Activated CD4-positive, alpha-beta memory T cell treated with anti-CD3 and anti-CD28 coated beads for 36 hours (primary cell): ENCODE measurements at regions of chr6 and their contacts with region 1.

Region 1: GRCh38 chr6:106223300-106223930 is 102.1 kb downstream of the ATG5 start:
- DNase-seq: peak; percentile 75
- H3K4me3 Mint-ChIP-seq: no peak overlapping the region
- H3K27ac Mint-ChIP-seq: no peak overlapping the region
- H3K4me1 Mint-ChIP-seq: peaks cover 37% of the 10 kb centered on the region
- H3K27me3 Mint-ChIP-seq: no peaks in the 10 kb centered on the region

Region 2: DNA sequence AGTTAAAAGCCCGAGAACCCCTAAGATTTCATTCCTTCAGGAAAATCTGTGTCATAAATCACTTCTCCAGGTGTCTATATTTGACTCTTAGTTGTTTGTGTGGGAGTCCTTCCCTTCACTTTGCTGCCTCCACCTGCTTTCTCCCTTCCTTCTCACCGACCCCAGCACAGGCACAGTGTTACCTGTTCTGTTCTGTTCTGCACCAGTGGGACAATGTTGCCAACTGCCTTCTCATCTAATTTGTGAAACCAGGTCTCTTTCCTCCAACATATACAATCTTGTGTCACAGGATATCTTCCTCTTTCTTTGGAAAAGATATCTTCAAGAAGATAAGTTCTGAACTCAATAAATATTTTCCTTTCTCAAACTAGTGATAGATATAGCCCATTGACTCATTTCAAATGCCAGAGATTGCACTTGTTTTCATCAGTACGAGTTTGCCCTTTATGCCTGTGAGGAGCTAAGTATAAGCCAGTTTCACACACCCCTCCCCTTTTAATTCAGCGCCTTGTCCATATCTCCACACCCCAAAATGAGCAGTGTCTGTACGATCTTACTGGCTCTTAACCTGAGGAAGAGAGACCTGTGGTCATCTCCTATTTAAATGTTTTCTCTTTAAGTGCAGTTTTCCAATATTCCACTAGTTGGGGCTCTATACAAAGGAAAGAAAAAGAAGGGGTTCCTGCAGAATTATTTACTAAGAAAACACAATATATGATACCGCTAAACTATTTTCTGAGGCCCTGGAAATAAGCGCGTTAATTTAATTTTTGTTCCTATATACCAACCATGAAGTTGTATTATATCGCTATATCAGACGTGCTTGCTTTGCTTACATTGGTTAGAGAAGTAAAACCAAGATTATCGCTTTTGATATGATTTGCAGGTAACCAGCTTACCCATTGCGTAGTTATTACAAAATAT is 738.9 kb before region 1 on chr6:
- CTCF ChIA-PET with region 1: interaction called, 10 read pairs
- POLR2A ChIA-PET with region 1: no interaction called
- intact Hi-C with region 1: loop called (anchors 1 kb)
- DNase-seq: no peak
- H3K4me3 Mint-ChIP-seq: peak overlapping the region; percentile 2
- H3K27ac Mint-ChIP-seq: peak overlapping the region; percentile 30
- H3K4me1 Mint-ChIP-seq: peaks cover 32% of the 10 kb centered on the region
- H3K27me3 Mint-ChIP-seq: peaks cover 7% of the 10 kb centered on the region

Region 3: DNA sequence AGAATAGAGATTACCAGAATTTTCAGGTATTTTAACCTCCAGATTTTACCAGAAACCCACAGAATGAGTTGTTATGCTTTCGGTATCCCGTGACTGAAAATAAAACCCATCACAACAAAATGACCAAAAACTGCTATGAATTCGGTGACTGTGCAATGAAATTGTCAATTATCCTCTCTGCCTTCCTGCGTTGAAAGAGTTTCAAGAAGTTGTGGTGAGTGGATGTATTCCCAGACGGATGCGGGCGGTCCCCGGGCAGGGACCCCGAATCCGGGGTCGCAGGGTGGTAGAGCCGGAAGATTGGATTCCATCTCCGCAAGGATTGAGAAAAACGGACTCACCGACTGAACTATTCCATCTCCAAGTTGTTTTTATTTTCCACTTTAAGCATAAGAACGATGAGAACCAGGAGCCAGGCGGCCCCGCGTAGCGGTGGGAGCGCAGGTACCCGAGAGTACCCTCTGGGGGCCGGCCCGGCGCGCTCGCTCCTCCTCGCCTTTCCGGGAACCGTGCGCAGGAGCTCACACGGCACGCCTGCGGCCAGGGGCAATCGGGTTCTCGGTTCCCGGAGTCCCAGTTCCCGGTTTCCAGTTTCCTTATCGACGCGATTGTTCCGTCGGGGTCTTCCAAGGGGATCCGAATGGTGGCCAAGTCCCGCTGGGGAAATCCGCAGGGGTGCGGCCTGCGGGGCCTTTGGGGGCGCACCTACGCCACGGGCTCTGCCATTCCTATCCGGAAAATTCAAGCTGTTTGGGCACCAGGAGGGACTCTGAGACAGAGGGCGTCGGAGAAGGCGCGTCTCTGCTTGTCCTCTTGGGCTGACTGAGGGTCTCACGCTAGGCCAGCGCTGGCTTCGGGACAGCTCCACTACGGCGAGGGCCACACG is 242.2 kb before region 1 on chr6:
- CTCF ChIA-PET with region 1: interaction called, 10 read pairs
- POLR2A ChIA-PET with region 1: no interaction called
- intact Hi-C with region 1: no loop called
- DNase-seq: peak; percentile 60
- H3K4me3 Mint-ChIP-seq: peak overlapping the region; percentile 78
- H3K27ac Mint-ChIP-seq: peak overlapping the region; percentile 93
- H3K4me1 Mint-ChIP-seq: peaks cover 53% of the 10 kb centered on the region
- H3K27me3 Mint-ChIP-seq: peaks cover 32% of the 10 kb centered on the region

Region 4: GRCh38 chr6:106103728-106104109 is 119.7 kb before region 1 on chr6:
- CTCF ChIA-PET with region 1: interaction called, 38 read pairs
- POLR2A ChIA-PET with region 1: interaction called, 7 read pairs
- intact Hi-C with region 1: loop called (anchors 2 kb)
- DNase-seq: peak; percentile 71
- H3K4me3 Mint-ChIP-seq: peak overlapping the region; percentile 91
- H3K27ac Mint-ChIP-seq: peak overlapping the region; percentile 96
- H3K4me1 Mint-ChIP-seq: peaks cover 79% of the 10 kb centered on the region
- H3K27me3 Mint-ChIP-seq: no peaks in the 10 kb centered on the region

Region 5: GRCh38 chr6:106163446-106163965 is 59.9 kb before region 1 on chr6:
- CTCF ChIA-PET with region 1: interaction called, 15 read pairs
- POLR2A ChIA-PET with region 1: no interaction called
- intact Hi-C with region 1: no loop called
- DNase-seq: peak; percentile 80
- H3K4me3 Mint-ChIP-seq: peak overlapping the region; percentile 64
- H3K27ac Mint-ChIP-seq: peak overlapping the region; percentile 91
- H3K4me1 Mint-ChIP-seq: peaks cover 60% of the 10 kb centered on the region
- H3K27me3 Mint-ChIP-seq: no peaks in the 10 kb centered on the region

Region 6: GRCh38 chr6:106300944-106301343 is 77.5 kb after region 1 on chr6:
- CTCF ChIA-PET with region 1: interaction called, 13 read pairs
- POLR2A ChIA-PET with region 1: no interaction called
- intact Hi-C with region 1: no loop called
- DNase-seq: no peak
- H3K4me3 Mint-ChIP-seq: no peak overlapping the region
- H3K27ac Mint-ChIP-seq: no peak overlapping the region
- H3K4me1 Mint-ChIP-seq: peaks cover 15% of the 10 kb centered on the region
- H3K27me3 Mint-ChIP-seq: no peaks in the 10 kb centered on the region